A673 (cell line): ENCODE measurements at regions of chr21 and their contacts with region 1.

Region 1: DNA sequence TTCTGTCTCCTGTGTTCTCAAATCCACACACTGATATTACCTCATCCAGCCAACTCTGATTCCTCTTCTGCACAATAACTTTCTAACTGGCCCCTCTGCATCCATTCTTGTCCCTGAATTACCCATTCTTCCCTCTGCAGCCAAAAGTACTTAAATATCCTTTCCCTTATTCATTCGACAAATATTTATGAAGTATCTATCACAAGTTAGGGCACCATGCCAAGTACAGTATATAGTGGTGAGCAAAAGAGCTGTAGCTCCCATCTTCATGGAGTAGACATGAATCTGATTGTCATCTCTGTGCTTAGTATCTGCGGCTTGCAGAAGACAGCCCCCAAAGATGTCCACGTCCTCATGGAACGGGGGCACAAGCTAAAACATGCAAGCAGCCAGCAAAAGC is 316.8 kb downstream of the SETD4 start:
- DNase-seq: no peak
- H3K4me3 ChIP-seq: no peak overlapping the region
- H3K27ac ChIP-seq: no peak overlapping the region
- H3K4me1 ChIP-seq: peaks cover 8% of the 10 kb centered on the region
- H3K27me3 ChIP-seq: peaks cover 49% of the 10 kb centered on the region
- CTCF ChIP-seq: no peak

Region 2: GRCh38 chr21:35333831-35334618 is 409.5 kb before region 1 on chr21:
- CTCF ChIA-PET with region 1: no interaction called
- POLR2A ChIA-PET with region 1: no interaction called
- intact Hi-C with region 1: no loop called
- DNase-seq: no peak
- H3K4me3 ChIP-seq: no peak overlapping the region
- H3K27ac ChIP-seq: no peak overlapping the region
- H3K4me1 ChIP-seq: no peaks in the 10 kb centered on the region
- H3K27me3 ChIP-seq: no peaks in the 10 kb centered on the region
- CTCF ChIP-seq: no peak

Region 3: GRCh38 chr21:35579520-35580293 is 163.9 kb before region 1 on chr21:
- CTCF ChIA-PET with region 1: no interaction called
- POLR2A ChIA-PET with region 1: no interaction called
- intact Hi-C with region 1: loop called (anchors 10 kb)
- DNase-seq: no peak
- H3K4me3 ChIP-seq: no peak overlapping the region
- H3K27ac ChIP-seq: no peak overlapping the region
- H3K4me1 ChIP-seq: no peaks in the 10 kb centered on the region
- H3K27me3 ChIP-seq: peaks cover 39% of the 10 kb centered on the region
- CTCF ChIP-seq: no peak

Region 4: GRCh38 chr21:35940074-35940927 is 196.7 kb after region 1 on chr21:
- CTCF ChIA-PET with region 1: no interaction called
- POLR2A ChIA-PET with region 1: no interaction called
- intact Hi-C with region 1: no loop called
- DNase-seq: peak; percentile 81
- H3K4me3 ChIP-seq: no peak overlapping the region
- H3K27ac ChIP-seq: no peak overlapping the region
- H3K4me1 ChIP-seq: no peaks in the 10 kb centered on the region
- H3K27me3 ChIP-seq: no peaks in the 10 kb centered on the region
- CTCF ChIP-seq: peak; percentile 77